Aorta (tissue), 5 donors: ENCODE measurements at regions of chr17 and their contacts with region 1.

Region 1: GRCh38 chr17:63406689-63407330 is 39.3 kb downstream of the CYB561 start:
- DNase-seq: peak in 1 of 2 donors; percentile 63
- ATAC-seq: peak; percentile 89
- H3K4me3 ChIP-seq: no peak overlapping the region
- H3K27ac ChIP-seq: peak overlapping the region; percentile 17 to 69
- H3K4me1 ChIP-seq: peaks cover 0 to 9% of the 10 kb centered on the region in 2 donors
- H3K27me3 ChIP-seq: no peaks in the 10 kb centered on the region

Region 2: GRCh38 chr17:62995377-62995885 is 411.4 kb before region 1 on chr17:
- intact Hi-C with region 1: loop called in 1 of 2 experiments (anchors 10 kb)
- DNase-seq: no peak
- ATAC-seq: no peak
- H3K4me3 ChIP-seq: no peak overlapping the region
- H3K27ac ChIP-seq: no peak overlapping the region
- H3K4me1 ChIP-seq: no peaks in the 10 kb centered on the region
- H3K27me3 ChIP-seq: no peaks in the 10 kb centered on the region

Region 3: DNA sequence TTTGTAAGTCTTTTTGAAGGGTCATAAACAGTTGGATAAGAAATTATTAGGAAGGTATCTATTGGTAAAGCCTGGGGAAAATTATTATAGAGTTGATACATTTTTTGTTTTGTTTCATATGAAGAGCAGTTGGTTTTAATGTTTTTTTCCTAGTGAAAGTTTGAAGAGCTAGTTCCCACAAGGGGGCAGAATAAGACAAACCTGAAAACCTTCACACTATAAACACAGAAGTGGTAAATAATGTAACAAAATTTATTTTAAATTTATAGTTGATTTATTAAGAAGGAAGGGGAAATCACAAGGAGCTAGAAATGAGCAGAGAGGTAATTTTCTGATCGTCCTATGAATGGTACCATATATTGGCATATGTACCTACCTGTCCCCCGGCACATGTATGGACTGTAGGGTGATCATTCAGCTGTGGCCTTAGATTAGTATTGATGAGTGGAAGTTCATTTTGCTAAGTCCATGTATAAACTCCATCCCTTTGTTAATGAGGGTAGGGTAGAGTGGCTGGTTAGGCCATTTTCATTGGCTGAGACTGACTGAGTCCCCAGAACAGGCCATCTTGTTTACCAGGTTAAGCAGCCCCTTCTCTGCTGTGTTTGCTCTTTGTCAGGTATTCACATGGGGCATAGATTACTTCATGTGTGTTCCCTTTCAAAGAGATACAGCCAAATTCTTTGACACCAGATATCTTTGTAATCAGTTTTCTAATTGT is 324.4 kb before region 1 on chr17:
- intact Hi-C with region 1: loop called (anchors 2 to 5 kb)
- DNase-seq: no peak
- ATAC-seq: no peak
- H3K4me3 ChIP-seq: no peak overlapping the region
- H3K27ac ChIP-seq: no peak overlapping the region
- H3K4me1 ChIP-seq: no peaks in the 10 kb centered on the region
- H3K27me3 ChIP-seq: no peaks in the 10 kb centered on the region

Region 4: GRCh38 chr17:63156986-63157385 is 249.8 kb before region 1 on chr17:
- intact Hi-C with region 1: no loop called
- DNase-seq: no peak
- ATAC-seq: no peak
- H3K4me3 ChIP-seq: no peak overlapping the region
- H3K27ac ChIP-seq: no peak overlapping the region
- H3K4me1 ChIP-seq: no peaks in the 10 kb centered on the region
- H3K27me3 ChIP-seq: no peaks in the 10 kb centered on the region

Region 5: DNA sequence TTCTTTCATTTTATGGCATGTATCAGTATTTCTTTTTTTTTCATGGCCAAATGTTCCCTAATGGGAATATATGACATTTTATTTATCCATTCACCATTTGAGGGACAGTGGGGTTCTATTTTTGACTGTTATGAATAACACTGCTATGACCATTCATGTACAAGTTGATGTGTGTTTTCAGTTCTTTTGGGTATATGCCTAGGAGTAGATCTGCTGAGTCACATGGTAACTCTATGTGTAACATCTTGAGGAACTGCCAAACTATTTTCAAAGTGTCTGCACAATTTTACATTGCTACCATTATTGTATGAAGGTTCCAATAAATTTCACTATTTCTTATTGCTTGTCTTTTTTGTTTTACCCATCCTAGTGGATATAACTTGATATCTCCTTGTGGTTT is 217.7 kb before region 1 on chr17:
- intact Hi-C with region 1: loop called in 1 of 2 experiments (anchors 10 kb)
- DNase-seq: no peak
- ATAC-seq: peak; percentile 38
- H3K4me3 ChIP-seq: no peak overlapping the region
- H3K27ac ChIP-seq: no peak overlapping the region
- H3K4me1 ChIP-seq: no peaks in the 10 kb centered on the region
- H3K27me3 ChIP-seq: no peaks in the 10 kb centered on the region

Region 6: GRCh38 chr17:63445979-63446691 is 39.3 kb after region 1 on chr17 and contains the start of gene CYB561:
- intact Hi-C with region 1: no loop called
- DNase-seq: peak; percentile 84 to 94
- ATAC-seq: peak; percentile 85
- H3K4me3 ChIP-seq: peak within 1 kb of the TSS; percentile 29 to 44
- H3K27ac ChIP-seq: no peak within 1 kb of the TSS
- H3K4me1 ChIP-seq: no peaks in the 10 kb centered on the region
- H3K27me3 ChIP-seq: no peaks in the 10 kb centered on the region
- total RNA-seq, gene CYB561: 13.2 to 31.6 TPM